GM10248 (cell line): ENCODE measurements at regions of chr1 and their contacts with region 1.

Region 1: DNA sequence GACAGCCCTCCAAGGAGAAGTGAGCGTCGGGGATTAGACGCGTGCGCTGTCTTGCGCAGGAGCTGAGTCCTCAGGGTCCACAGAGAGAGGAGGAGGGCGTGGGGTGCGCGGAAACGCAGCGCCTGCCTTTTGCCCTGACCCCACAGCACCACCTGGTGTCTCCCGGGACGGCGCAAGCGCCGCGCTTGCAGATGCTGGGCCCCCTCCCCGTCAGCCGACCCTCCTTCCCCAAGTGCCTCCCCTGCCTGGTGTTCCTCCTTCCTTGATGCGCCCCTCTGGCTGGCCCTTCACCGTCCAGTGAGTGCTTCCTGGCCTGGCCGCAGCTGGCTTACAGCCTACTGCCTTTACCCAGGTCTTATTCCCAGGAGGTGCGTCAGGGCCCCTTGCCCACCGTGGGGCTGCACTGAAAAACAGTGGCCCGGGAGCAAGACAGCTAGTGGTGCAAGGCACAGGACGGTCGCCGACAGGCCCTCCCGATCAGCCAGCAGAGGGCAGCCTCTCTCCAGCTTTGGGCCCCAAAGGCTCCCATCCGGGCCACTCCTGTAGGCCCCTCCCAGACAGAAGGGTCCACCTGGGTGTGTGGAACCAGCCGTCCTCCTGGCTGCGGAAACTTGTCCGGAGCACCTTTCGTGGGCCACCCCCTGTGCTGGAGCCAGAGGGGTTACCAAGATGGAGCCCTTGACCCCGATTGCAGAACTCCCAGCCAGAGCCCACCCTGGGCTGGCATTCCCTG is 12.9 kb upstream of the PHLDA3 start:
- DNase-seq: peak; percentile 91
- CTCF ChIP-seq: peak; percentile 84

Region 2: GRCh38 chr1:201436393-201436792 is 45.5 kb before region 1 on chr1:
- CTCF ChIA-PET with region 1: interaction called, 234 read pairs
- POLR2A ChIA-PET with region 1: no interaction called
- DNase-seq: no peak
- CTCF ChIP-seq: no peak

Region 3: DNA sequence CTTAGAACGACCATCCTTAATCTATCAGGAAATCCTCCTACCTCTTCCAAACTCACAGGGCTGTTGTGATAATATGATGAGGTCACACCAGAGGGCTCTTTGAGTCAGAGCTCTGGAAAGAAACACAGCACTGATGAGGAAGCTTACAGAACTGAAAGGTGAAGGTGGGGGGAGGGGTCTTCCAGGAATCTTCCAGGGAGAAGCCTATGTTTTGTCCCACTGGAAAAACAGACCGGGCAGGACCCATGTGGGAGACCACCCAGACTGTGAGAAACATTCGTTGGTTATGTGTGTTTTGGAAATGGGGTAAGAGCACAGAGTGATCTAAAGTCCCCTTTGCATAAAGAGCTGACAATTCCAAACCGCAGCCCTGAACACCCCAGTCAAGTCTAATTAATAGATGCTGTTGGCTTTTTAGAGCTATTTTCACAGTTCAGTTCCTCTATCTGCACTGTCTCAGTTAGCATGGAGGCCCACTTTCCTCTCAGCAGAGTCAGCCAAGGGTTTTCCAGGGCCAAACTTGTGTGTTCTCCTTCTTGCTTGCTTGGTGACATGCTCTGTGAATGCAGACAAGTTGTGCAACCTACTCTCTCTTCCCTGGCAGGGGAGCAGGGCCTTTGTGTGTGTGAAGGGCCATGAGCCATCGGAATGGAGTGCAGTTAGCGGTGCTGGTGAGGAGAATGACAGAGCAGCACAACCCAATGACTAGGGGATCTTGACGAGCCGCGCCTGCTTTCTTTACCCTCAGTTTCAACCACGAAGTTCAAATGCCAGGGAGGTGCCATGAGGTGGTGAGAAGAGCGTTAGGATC is 25.2 kb before region 1 on chr1:
- CTCF ChIA-PET with region 1: interaction called, 234 read pairs
- POLR2A ChIA-PET with region 1: interaction called, 3 read pairs
- DNase-seq: no peak
- CTCF ChIP-seq: no peak

Region 4: DNA sequence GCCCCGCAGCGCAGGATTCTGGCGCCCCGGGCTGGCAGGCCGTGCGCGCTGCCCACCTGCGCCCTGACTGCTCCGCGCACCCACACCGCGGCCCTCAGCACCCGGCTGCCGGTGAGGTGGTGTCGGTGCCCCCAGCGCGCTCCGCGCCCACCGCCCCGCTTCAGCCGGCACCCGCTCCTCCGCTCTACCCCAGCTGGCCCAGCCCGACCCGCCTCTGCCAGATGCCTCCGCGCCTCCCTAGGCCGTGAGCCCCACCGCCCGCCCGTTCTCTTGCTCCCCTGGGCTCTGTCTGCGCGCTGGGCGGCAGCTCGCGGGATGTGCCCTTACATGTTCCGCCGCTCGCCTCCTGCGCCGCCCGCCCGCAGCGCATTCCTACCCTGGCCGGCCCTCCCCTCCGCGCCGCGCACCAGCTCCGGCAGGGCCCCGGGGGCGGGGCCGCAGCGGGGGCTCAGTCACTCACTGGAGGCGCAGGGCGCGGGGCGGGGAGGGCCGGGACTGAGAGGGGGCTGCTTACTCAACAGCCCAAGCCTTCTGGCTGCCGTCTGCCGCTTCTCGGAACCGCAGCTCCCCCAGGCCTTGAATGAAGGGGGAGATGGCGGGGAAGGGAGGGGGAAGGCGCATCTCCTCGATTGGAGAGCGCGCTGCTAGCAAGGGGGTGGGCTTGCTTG is 12.9 kb before region 1 on chr1 and contains the start of gene PHLDA3:
- CTCF ChIA-PET with region 1: interaction called, 57 read pairs
- POLR2A ChIA-PET with region 1: no interaction called
- DNase-seq: peak; percentile 81
- CTCF ChIP-seq: no peak

Region 5: GRCh38 chr1:201511941-201512539 is 30.1 kb after region 1 on chr1:
- CTCF ChIA-PET with region 1: interaction called, 685 read pairs
- POLR2A ChIA-PET with region 1: interaction called, 16 read pairs
- DNase-seq: peak; percentile 65
- CTCF ChIP-seq: no peak

Region 6: GRCh38 chr1:201559679-201560162 is 77.8 kb after region 1 on chr1:
- CTCF ChIA-PET with region 1: interaction called, 15 read pairs
- POLR2A ChIA-PET with region 1: no interaction called
- DNase-seq: peak; percentile 86
- CTCF ChIP-seq: peak; percentile 91

Region 7: GRCh38 chr1:201828820-201829774 is 347.2 kb after region 1 on chr1 and contains the start of gene IPO9:
- CTCF ChIA-PET with region 1: interaction called, 13 read pairs
- POLR2A ChIA-PET with region 1: no interaction called
- DNase-seq: peak; percentile 99
- CTCF ChIP-seq: peak; percentile 83